ENCODE measurements at regions of chr10 and their contacts with region 1.

Region 1: GRCh38 chr10:30639946-30640786 is 10.6 kb upstream of the LYZL2 start:
- DNase-seq: no peak
- ATAC-seq: peak; percentile 40
- H3K4me3 Mint-ChIP-seq: no peak overlapping the region
- H3K27ac Mint-ChIP-seq: no peak overlapping the region
- H3K4me1 Mint-ChIP-seq: peaks cover 11% of the 10 kb centered on the region
- H3K27me3 Mint-ChIP-seq: peaks cover 37% of the 10 kb centered on the region

Region 2: DNA sequence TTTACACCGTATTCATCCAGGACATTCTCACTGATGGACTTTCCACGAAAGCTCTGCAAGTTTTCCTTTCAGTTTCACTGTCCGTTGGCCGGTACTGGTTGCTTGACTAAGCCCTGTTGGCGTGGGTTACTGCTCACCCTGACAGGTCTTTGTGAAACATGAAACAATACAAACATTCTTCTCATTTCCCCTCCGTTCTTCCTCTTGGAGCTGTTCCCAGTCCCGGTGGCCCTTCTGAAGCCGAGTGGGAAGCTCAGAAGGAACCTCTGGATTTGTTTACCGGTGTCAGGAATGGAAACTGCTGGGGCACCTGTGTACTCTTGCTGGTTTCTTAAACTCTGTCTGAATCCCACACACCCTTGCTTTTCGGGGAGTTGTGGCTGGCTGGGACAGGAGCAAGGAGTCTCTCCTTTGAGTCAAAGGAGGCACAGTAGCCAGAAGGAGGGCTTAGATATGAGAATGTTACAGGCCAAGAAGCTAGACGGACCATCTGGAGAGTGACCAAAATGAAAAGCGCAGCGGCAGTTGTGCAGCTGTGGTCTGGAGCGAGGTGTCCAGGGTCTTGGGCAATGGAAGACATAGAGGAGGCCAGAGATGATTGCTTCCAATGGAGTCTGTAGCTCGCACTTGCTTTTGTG is 56.3 kb before region 1 on chr10:
- CTCF ChIA-PET with region 1: interaction called, 10 read pairs
- POLR2A ChIA-PET with region 1: no interaction called
- intact Hi-C with region 1: no loop called
- DNase-seq: peak; percentile 21
- ATAC-seq: no peak
- H3K4me3 Mint-ChIP-seq: no peak overlapping the region
- H3K27ac Mint-ChIP-seq: no peak overlapping the region
- H3K4me1 Mint-ChIP-seq: peaks cover 3% of the 10 kb centered on the region
- H3K27me3 Mint-ChIP-seq: no peaks in the 10 kb centered on the region

Region 3: GRCh38 chr10:30656233-30656632 is 16.1 kb after region 1 on chr10:
- CTCF ChIA-PET with region 1: interaction called, 15 read pairs
- POLR2A ChIA-PET with region 1: no interaction called
- intact Hi-C with region 1: no loop called
- DNase-seq: no peak
- ATAC-seq: no peak
- H3K4me3 Mint-ChIP-seq: no peak overlapping the region
- H3K27ac Mint-ChIP-seq: no peak overlapping the region
- H3K4me1 Mint-ChIP-seq: peaks cover 8% of the 10 kb centered on the region
- H3K27me3 Mint-ChIP-seq: peaks cover 31% of the 10 kb centered on the region

Region 4: DNA sequence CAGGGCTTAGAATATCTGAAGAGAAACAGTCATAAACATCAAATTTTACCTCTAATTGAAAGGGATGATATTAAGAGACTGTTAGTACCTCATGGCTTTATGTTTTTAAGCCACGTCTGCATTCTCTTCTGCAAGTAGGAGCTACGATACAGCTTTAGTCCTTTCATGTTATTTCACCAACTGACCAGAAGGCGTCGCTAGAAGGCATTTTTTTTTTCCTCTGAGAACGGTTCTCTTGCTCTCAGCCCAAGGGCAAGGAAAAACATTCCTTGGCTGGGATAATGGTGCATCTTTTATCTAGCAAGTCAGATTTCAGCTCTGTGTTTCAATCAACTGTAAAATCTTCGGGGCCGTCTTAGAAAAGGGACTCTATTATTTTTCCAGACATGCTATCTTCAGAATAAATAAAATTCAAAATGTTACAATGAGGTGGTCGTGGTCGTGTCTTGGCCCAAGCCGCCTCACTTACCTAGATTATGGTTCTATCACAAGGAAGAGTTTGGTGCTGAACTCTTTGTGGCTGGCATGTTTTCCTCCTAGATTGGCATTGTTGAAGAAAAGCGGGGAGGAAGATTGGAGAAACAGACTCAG is 31.0 kb after region 1 on chr10:
- CTCF ChIA-PET with region 1: interaction called, 22 read pairs
- POLR2A ChIA-PET with region 1: no interaction called
- intact Hi-C with region 1: no loop called
- DNase-seq: peak; percentile 47
- ATAC-seq: peak; percentile 74
- H3K4me3 Mint-ChIP-seq: peak overlapping the region; percentile 27
- H3K27ac Mint-ChIP-seq: no peak overlapping the region
- H3K4me1 Mint-ChIP-seq: peaks cover 26% of the 10 kb centered on the region
- H3K27me3 Mint-ChIP-seq: peaks cover 11% of the 10 kb centered on the region

Region 5: GRCh38 chr10:30722956-30723620 is 82.9 kb after region 1 on chr10:
- CTCF ChIA-PET with region 1: interaction called, 6 read pairs
- POLR2A ChIA-PET with region 1: no interaction called
- intact Hi-C with region 1: loop called in 1 of 2 experiments (anchors 2 kb)
- DNase-seq: no peak
- ATAC-seq: no peak
- H3K4me3 Mint-ChIP-seq: no peak overlapping the region
- H3K27ac Mint-ChIP-seq: no peak overlapping the region
- H3K4me1 Mint-ChIP-seq: peaks cover 4% of the 10 kb centered on the region
- H3K27me3 Mint-ChIP-seq: no peaks in the 10 kb centered on the region

Measured in activated CD4-positive, alpha-beta T cell treated with anti-CD3 and anti-CD28 coated beads for 36 hours (primary cell).